AG04449 (cell line): ENCODE measurements at regions of chr10 and their contacts with region 1.

Region 1: GRCh38 chr10:24518981-24519597 is 204.6 kb downstream of the ARHGAP21 start:
- DNase-seq: no peak
- H3K4me3 ChIP-seq: no peak overlapping the region
- CTCF ChIP-seq: peak; percentile 70

Region 2: DNA sequence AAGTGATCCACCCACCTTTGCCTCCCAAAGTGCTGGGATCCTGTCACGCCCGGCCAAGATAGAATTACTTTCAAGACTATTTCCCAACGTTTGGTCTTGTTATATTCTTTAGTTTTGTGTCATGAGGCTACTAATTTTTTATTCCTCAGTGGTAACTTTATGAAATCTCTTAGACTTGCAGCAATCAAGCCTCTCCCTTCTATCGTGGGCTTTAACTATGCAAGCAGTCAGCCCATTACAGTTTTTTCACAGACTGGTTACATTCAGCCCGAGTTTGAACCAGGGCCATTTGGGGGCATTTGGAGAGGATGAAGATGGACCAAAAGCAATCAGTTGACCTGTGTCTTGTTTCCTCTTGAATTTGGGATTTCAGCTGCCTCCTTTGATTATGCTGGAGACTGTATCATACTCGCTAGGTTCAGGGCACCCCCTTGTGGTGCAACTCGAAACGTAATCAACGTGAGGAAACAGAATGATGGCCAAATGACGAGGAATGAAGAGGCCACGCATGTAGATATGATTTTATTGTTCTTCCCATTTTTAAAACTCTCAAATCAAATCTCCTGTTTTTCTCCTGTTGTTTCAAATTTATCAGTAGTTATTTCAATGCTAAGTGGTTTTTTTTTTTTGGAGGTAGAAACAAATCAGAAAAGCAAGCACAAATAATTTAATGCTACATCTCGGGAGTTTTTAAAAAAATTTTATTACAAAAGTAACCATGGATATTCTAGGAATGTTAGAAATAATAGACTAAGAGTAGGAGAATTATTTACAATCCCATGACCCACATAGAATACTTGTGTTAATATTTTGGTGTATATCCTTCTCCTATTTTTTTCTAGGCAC is 158.6 kb before region 1 on chr10:
- CTCF ChIA-PET with region 1: interaction called, 74 read pairs
- POLR2A ChIA-PET with region 1: no interaction called
- DNase-seq: no peak
- H3K4me3 ChIP-seq: no peak overlapping the region
- CTCF ChIP-seq: peak; percentile 81

Region 3: GRCh38 chr10:24394461-24395190 is 124.5 kb before region 1 on chr10:
- CTCF ChIA-PET with region 1: interaction called, 12 read pairs
- POLR2A ChIA-PET with region 1: no interaction called
- DNase-seq: no peak
- H3K4me3 ChIP-seq: no peak overlapping the region
- CTCF ChIP-seq: no peak

Region 4: GRCh38 chr10:24483489-24484100 is 35.5 kb before region 1 on chr10:
- CTCF ChIA-PET with region 1: interaction called, 14 read pairs
- POLR2A ChIA-PET with region 1: no interaction called
- DNase-seq: no peak
- H3K4me3 ChIP-seq: no peak overlapping the region
- CTCF ChIP-seq: no peak

Region 5: DNA sequence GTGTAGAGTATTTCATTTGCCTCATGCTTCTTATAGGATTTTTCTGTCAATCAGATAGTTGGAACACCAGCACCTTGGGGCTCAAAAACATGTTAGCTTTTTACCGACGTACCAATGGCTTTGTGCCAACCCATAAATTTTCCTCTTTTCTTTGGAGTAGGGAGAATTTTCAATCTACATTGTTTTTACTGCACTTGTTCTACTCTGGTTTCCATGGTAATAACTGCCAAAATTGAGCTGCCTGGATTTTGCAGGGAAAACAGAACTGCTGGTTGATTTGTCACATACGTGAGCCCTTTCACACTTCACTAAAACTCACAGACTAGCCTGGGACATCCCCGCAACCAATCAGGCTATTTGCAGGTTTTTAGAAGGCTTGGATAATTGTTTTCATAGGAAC is 14.9 kb after region 1 on chr10:
- CTCF ChIA-PET with region 1: interaction called, 37 read pairs
- POLR2A ChIA-PET with region 1: no interaction called
- DNase-seq: no peak
- H3K4me3 ChIP-seq: no peak overlapping the region
- CTCF ChIP-seq: no peak

Region 6: GRCh38 chr10:24569330-24569796 is 50.3 kb after region 1 on chr10:
- CTCF ChIA-PET with region 1: no interaction called
- POLR2A ChIA-PET with region 1: no interaction called
- DNase-seq: no peak
- H3K4me3 ChIP-seq: no peak overlapping the region
- CTCF ChIP-seq: no peak

Region 7: DNA sequence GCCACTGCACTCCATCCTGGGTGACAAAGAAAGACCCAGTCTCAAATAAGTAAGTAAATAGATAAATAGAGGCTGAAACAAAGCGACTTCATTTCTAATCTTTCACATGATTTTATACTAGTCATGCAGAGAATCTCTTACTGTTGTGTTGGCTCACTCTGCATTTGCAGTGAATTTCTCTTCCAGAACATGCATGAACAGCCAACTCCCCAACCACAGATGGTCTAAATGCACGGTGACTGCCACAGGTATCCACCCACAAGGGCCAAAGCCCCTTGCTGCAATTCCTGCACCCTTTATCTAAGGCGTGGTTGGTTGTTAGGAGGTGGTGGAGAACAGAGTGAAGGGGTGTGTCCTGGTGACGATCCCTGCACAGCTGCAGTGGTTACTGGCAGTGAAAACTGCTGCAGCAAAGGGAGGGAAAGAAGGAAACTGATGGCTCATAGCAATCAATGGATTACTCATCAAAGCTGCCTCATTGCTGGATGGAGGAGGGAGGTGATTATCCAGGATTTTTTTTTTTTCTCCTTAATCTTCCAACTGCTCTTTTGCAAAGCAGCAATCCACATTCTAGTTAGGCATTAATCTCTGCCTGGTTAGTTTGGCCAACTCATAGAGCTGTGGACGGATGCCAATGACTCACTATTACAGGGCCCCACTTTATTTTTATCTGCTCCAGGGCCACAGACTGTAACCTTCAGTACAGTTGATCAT is 382.8 kb after region 1 on chr10:
- CTCF ChIA-PET with region 1: no interaction called
- POLR2A ChIA-PET with region 1: no interaction called
- DNase-seq: peak; percentile 75
- H3K4me3 ChIP-seq: peak overlapping the region; percentile 21
- CTCF ChIP-seq: no peak